CD4-positive, alpha-beta memory T cell (primary cell): ENCODE measurements at regions of chr3 and their contacts with region 1.

Region 1: DNA sequence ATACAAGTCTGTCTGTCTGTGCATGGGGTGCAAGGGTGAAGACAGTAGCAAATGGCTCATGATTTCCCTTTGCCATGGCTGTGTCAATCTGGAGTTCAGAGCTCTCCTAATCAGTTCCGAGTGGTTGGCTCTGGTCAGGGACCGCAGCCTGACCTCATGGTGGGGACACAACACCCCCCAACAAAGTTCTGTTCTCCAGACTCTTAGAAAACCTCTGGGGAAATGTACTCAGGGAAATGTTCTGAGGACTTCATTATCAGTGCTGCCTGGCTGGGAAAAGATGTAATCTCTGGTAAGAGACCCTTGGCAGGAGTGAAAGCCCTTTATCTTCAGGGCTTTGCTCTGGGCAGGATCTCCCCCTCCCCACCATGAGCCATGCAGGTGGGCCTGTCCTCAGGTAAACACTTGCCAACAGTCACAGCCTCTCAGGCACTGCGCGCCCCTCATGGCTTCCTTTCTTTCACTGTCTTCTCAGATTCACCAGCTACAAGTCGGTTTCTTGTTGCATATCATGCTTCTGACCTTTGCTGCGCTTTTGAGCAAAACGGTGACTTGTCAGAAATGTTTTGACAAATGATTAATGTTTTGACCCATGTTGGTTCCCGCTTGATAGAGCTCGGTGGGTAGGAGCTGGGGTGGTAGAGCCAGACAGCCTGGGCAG is 95.5 kb downstream of the ST6GAL1 start:
- DNase-seq: peak in 3 of 5 donors; percentile 18 to 49 (median 35)
- H3K4me3 ChIP-seq: peak overlapping the region; percentile 57 to 89
- H3K4me3 Mint-ChIP-seq: peak overlapping the region; percentile 81 to 97 (median 92)
- H3K27ac ChIP-seq: peak overlapping the region; percentile 68
- H3K27ac Mint-ChIP-seq: peak overlapping the region; percentile 86 to 98 (median 92)
- H3K4me1 ChIP-seq: peaks cover 82% of the 10 kb centered on the region
- H3K4me1 Mint-ChIP-seq: peaks cover 48 to 80% (median 62%) of the 10 kb centered on the region in 4 donors
- H3K27me3 ChIP-seq: no peaks in the 10 kb centered on the region
- H3K27me3 Mint-ChIP-seq: no peaks in the 10 kb centered on the region

Region 2: GRCh38 chr3:186909078-186909853 is 116.5 kb before region 1 on chr3:
- CTCF ChIA-PET with region 1: interaction called, 6 read pairs
- POLR2A ChIA-PET with region 1: interaction called, 12 read pairs
- intact Hi-C with region 1: no loop called
- DNase-seq: peak; percentile 84 to 89 (median 87)
- H3K4me3 ChIP-seq: peak overlapping the region; percentile 50 to 66
- H3K4me3 Mint-ChIP-seq: peak overlapping the region; percentile 58 to 86 (median 77)
- H3K27ac ChIP-seq: peak overlapping the region; percentile 58
- H3K27ac Mint-ChIP-seq: peak overlapping the region; percentile 91 to 95 (median 94)
- H3K4me1 ChIP-seq: peaks cover 32% of the 10 kb centered on the region
- H3K4me1 Mint-ChIP-seq: peaks cover 22 to 52% (median 38%) of the 10 kb centered on the region in 4 donors
- H3K27me3 ChIP-seq: no peaks in the 10 kb centered on the region
- H3K27me3 Mint-ChIP-seq: no peaks in the 10 kb centered on the region

Region 3: DNA sequence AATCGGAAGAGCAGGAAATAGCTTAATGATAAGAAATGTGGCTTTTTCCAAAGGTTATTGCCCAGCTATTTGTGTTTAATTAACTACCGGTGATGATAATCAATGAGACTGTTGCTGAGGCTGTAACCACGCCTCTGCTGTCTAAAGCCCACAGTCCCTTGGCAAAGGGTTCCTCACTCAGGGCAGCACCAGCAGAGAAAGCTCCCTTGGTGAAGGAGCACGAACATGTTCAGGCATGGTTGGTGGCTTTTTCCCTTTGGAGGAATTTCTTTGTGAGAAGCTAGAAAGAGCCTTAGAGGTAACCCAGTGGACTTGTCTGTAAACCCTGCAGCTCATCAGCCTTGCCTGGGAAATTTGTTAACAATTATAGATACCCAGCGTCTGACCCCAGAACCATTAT is 103.0 kb before region 1 on chr3:
- CTCF ChIA-PET with region 1: no interaction called
- POLR2A ChIA-PET with region 1: no interaction called
- intact Hi-C with region 1: no loop called
- DNase-seq: no peak
- H3K4me3 ChIP-seq: no peak overlapping the region
- H3K4me3 Mint-ChIP-seq: no peak overlapping the region
- H3K27ac ChIP-seq: no peak overlapping the region
- H3K27ac Mint-ChIP-seq: no peak overlapping the region
- H3K4me1 ChIP-seq: peaks cover 2% of the 10 kb centered on the region
- H3K4me1 Mint-ChIP-seq: peaks cover 0 to 12% (median 5%) of the 10 kb centered on the region in 4 donors
- H3K27me3 ChIP-seq: no peaks in the 10 kb centered on the region
- H3K27me3 Mint-ChIP-seq: no peaks in the 10 kb centered on the region

Region 4: GRCh38 chr3:187000711-187001151 is 25.1 kb before region 1 on chr3:
- CTCF ChIA-PET with region 1: interaction called, 6 read pairs
- POLR2A ChIA-PET with region 1: interaction called, 52 read pairs
- intact Hi-C with region 1: no loop called
- DNase-seq: no peak
- H3K4me3 ChIP-seq: no peak overlapping the region
- H3K4me3 Mint-ChIP-seq: peak overlapping the region in 6 of 8 donors; percentile 5 to 66 (median 56)
- H3K27ac ChIP-seq: no peak overlapping the region
- H3K27ac Mint-ChIP-seq: peak overlapping the region; percentile 21 to 89 (median 80)
- H3K4me1 ChIP-seq: peaks cover 71% of the 10 kb centered on the region
- H3K4me1 Mint-ChIP-seq: peaks cover 54 to 81% (median 70%) of the 10 kb centered on the region in 4 donors
- H3K27me3 ChIP-seq: no peaks in the 10 kb centered on the region
- H3K27me3 Mint-ChIP-seq: no peaks in the 10 kb centered on the region

Region 5: DNA sequence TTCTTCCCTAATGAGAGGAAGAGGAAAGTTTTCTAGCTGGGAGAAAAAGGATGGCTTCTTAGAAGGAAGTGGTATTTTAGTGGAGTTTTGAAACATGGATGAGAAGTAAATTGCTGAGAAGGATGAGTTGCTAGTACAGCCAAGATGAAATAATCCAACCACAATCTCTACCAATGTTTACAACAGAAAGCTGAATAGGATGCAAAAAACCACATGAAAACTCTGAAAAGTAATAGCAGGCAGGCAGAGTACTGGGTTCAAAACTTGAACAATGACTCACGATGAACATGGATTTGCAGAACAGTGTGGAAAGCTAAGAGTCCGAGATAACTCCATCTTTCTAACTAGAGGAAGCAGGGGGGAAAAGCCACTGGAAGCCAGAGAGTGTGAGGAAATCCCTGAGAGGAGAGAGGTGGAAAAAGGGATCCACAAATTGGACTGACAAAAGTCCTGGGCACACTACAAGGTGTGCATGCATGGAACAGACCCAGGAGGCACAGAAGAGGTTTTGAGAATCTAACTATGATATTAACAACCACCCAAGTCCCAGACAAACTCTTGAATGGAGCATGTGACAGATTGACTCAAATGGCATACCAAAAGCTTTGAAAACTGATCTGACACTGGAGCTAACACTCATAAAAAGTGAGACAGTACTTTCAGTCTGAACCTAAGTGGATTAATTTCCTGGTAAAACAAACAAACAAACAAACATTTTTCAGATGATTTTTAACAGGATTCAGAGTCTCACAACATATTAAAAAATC is 18.7 kb before region 1 on chr3:
- CTCF ChIA-PET with region 1: interaction called, 6 read pairs
- POLR2A ChIA-PET with region 1: interaction called, 52 read pairs
- intact Hi-C with region 1: loop called (anchors 1 kb)
- DNase-seq: peak in 3 of 5 donors; percentile 31 to 59 (median 38)
- H3K4me3 ChIP-seq: peak overlapping the region in 1 of 2 donors; percentile 12
- H3K4me3 Mint-ChIP-seq: peak overlapping the region; percentile 1 to 79 (median 58)
- H3K27ac ChIP-seq: peak overlapping the region; percentile 39
- H3K27ac Mint-ChIP-seq: peak overlapping the region; percentile 5 to 72 (median 58)
- H3K4me1 ChIP-seq: peaks cover 67% of the 10 kb centered on the region
- H3K4me1 Mint-ChIP-seq: peaks cover 52 to 70% (median 63%) of the 10 kb centered on the region in 4 donors
- H3K27me3 ChIP-seq: no peaks in the 10 kb centered on the region
- H3K27me3 Mint-ChIP-seq: no peaks in the 10 kb centered on the region

Region 6: DNA sequence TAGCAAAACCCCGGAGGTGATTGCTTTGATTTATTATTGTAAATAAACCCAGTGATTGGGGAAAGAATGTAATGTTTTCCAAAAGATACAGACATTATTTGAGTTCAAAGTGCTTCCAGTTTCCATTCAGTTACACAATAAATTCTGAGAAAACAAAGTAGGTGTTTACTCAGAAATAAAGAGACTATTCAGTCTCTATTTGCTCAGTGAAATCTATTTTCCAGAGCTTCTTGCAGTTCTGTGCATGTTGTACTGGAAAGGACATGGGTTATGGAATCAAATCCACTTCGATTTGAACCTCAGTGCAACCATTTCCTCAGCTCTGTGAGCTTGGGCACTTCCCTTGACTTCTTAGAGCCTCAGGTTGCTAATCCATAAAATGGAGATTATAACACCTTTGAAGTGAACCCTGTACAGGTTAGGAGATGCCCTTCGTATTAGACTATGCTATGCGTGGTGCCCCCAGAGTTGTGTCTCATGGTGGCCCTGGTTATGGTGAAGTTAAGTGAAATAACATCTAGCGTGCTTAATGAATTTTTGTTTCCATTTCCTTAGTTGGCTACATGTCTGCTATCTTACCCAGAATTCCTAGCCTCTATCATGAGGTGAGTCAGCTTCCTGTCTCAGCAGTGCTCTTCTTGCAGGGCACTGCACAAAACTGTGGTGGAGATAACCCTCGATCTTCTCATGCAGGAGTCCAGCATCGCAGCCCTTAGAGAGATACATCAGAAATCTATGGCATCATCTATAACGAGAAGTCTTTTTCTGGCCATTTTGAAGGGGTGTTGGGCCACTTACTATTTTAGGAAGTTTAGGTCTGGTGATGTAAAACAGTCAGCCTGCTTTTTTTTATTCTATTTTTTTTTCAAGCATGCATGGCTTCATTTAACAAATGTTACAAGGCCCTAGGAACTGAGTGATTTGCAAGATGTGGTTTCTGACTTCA is 15.8 kb after region 1 on chr3:
- CTCF ChIA-PET with region 1: interaction called, 8 read pairs
- POLR2A ChIA-PET with region 1: interaction called, 176 read pairs
- intact Hi-C with region 1: loop called (anchors 1 kb)
- DNase-seq: peak; percentile 55 to 87 (median 65)
- H3K4me3 ChIP-seq: peak overlapping the region in 1 of 2 donors; percentile 17
- H3K4me3 Mint-ChIP-seq: peak overlapping the region; percentile 60 to 82 (median 72)
- H3K27ac ChIP-seq: peak overlapping the region; percentile 59
- H3K27ac Mint-ChIP-seq: peak overlapping the region; percentile 90 to 97 (median 94)
- H3K4me1 ChIP-seq: peaks cover 87% of the 10 kb centered on the region
- H3K4me1 Mint-ChIP-seq: peaks cover 65 to 85% (median 79%) of the 10 kb centered on the region in 4 donors
- H3K27me3 ChIP-seq: no peaks in the 10 kb centered on the region
- H3K27me3 Mint-ChIP-seq: no peaks in the 10 kb centered on the region

Region 7: GRCh38 chr3:187066228-187066995 is 40.6 kb after region 1 on chr3:
- CTCF ChIA-PET with region 1: interaction called, 12 read pairs
- POLR2A ChIA-PET with region 1: interaction called, 39 read pairs
- intact Hi-C with region 1: loop called (anchors 2 kb)
- DNase-seq: peak; percentile 38 to 76 (median 56)
- H3K4me3 ChIP-seq: no peak overlapping the region
- H3K4me3 Mint-ChIP-seq: no peak overlapping the region
- H3K27ac ChIP-seq: no peak overlapping the region
- H3K27ac Mint-ChIP-seq: peak overlapping the region; percentile 44 to 94 (median 85)
- H3K4me1 ChIP-seq: peaks cover 46% of the 10 kb centered on the region
- H3K4me1 Mint-ChIP-seq: peaks cover 48 to 61% (median 54%) of the 10 kb centered on the region in 4 donors
- H3K27me3 ChIP-seq: no peaks in the 10 kb centered on the region
- H3K27me3 Mint-ChIP-seq: no peaks in the 10 kb centered on the region

Region 8: GRCh38 chr3:187130346-187131066 is 104.7 kb after region 1 on chr3:
- CTCF ChIA-PET with region 1: no interaction called
- POLR2A ChIA-PET with region 1: interaction called, 4 read pairs
- intact Hi-C with region 1: loop called (anchors 1 kb)
- DNase-seq: peak; percentile 74 to 86 (median 83)
- H3K4me3 ChIP-seq: peak overlapping the region in 1 of 2 donors; percentile 37
- H3K4me3 Mint-ChIP-seq: peak overlapping the region; percentile 22 to 82 (median 74)
- H3K27ac ChIP-seq: peak overlapping the region; percentile 74
- H3K27ac Mint-ChIP-seq: peak overlapping the region; percentile 93 to 99 (median 98)
- H3K4me1 ChIP-seq: peaks cover 26% of the 10 kb centered on the region
- H3K4me1 Mint-ChIP-seq: peaks cover 16 to 39% (median 27%) of the 10 kb centered on the region in 4 donors
- H3K27me3 ChIP-seq: no peaks in the 10 kb centered on the region
- H3K27me3 Mint-ChIP-seq: no peaks in the 10 kb centered on the region